CD4-positive, alpha-beta T cell (primary cell): ENCODE measurements at regions of chrX and their contacts with region 1.

Region 1: GRCh38 chrX:19887911-19888879 is 795 bp upstream of the SH3KBP1 start:
- DNase-seq: peak in 13 of 14 experiments; percentile 9 to 81 (median 26)
- ATAC-seq: peak; percentile 62
- H3K4me3 ChIP-seq: peak overlapping the region; percentile 66
- H3K4me3 Mint-ChIP-seq: peak overlapping the region; percentile 88
- H3K27ac ChIP-seq: peak overlapping the region in 1 of 2 donors; percentile 56
- H3K27ac Mint-ChIP-seq: peak overlapping the region; percentile 85
- H3K4me1 ChIP-seq: peaks cover 34% of the 10 kb centered on the region
- H3K4me1 Mint-ChIP-seq: peaks cover 51% of the 10 kb centered on the region
- H3K27me3 ChIP-seq: no peaks in the 10 kb centered on the region
- H3K27me3 Mint-ChIP-seq: no peaks in the 10 kb centered on the region
- CTCF ChIP-seq: peak; percentile 35

Region 2: DNA sequence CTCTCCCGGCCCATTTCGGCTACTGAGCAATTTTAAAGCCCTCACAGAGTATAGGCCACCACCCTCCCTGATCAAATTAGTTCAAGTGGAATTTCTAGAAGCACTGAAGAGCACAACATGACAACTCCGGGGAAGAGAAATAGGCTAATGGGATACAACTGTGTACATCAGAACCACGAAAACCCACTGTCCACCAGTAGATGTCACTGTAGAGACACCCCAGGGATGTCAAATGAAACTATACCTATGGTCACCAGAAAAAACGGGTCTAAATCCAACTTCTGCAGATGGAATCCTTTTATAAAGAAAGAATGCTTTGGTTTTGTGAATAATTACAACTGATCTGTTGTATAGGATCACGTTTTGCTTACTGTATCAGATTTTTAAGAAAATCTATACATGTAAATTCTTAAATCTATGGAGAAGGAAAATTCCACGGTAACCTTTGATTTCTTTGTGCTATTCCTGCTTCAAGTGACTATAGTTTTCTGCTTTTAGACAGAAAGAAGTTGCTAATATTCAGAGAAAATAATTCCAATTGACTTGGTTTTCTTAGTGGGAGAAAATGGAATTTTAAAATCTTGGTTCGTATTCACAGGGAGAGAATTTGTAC is 343.4 kb before region 1 on chrX:
- CTCF ChIA-PET with region 1: no interaction called
- POLR2A ChIA-PET with region 1: no interaction called
- intact Hi-C with region 1: loop called (anchors 1 to 2 kb)
- DNase-seq: peak in 9 of 14 experiments; percentile 5 to 64 (median 23)
- ATAC-seq: peak; percentile 60
- H3K4me3 ChIP-seq: no peak overlapping the region
- H3K4me3 Mint-ChIP-seq: no peak overlapping the region
- H3K27ac ChIP-seq: no peak overlapping the region
- H3K27ac Mint-ChIP-seq: peak overlapping the region; percentile 40
- H3K4me1 ChIP-seq: no peaks in the 10 kb centered on the region
- H3K4me1 Mint-ChIP-seq: no peaks in the 10 kb centered on the region
- H3K27me3 ChIP-seq: no peaks in the 10 kb centered on the region
- H3K27me3 Mint-ChIP-seq: no peaks in the 10 kb centered on the region
- CTCF ChIP-seq: peak; percentile 60

Region 3: GRCh38 chrX:19682712-19683331 is 205.4 kb before region 1 on chrX:
- CTCF ChIA-PET with region 1: interaction called, 7 read pairs
- POLR2A ChIA-PET with region 1: no interaction called
- intact Hi-C with region 1: loop called (anchors 2 kb)
- DNase-seq: peak; percentile 51 to 93 (median 64)
- ATAC-seq: peak; percentile 79
- H3K4me3 ChIP-seq: no peak overlapping the region
- H3K4me3 Mint-ChIP-seq: peak overlapping the region; percentile 49
- H3K27ac ChIP-seq: peak overlapping the region; percentile 73 to 87
- H3K27ac Mint-ChIP-seq: peak overlapping the region; percentile 91
- H3K4me1 ChIP-seq: peaks cover 53% of the 10 kb centered on the region
- H3K4me1 Mint-ChIP-seq: peaks cover 84% of the 10 kb centered on the region
- H3K27me3 ChIP-seq: no peaks in the 10 kb centered on the region
- H3K27me3 Mint-ChIP-seq: no peaks in the 10 kb centered on the region
- CTCF ChIP-seq: no peak

Region 4: DNA sequence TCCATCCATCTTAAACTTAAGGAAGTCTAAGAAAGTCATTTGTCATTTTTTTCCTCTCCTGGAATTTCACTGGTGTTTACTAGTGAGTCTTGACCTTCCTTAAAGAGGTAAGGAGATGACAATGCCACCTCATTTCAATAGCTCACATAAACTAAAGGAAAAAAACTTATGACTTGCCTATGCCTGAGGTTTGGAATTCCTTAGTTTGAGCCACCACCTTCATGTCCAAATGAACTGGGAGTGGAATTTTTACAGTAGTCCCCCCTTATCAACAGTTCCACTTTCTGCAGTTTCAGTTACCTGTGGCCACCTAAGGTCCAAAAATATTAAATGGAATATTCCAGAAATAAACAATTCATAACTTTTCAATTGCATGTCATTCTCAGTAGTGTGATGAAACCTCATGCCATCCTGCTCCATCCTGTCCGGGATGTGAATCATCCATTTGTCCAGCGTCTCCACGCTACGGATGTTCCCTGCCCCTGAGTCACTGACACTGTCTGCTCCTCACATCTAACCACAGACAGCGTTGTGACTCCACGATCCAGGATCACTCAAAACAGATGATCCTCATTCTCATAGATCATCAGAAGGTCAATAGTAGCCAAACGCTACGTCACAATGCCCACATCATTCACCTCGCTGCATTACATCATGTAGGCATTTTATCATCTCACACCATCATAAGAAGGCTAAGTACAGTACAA is 178.2 kb before region 1 on chrX:
- CTCF ChIA-PET with region 1: no interaction called
- POLR2A ChIA-PET with region 1: no interaction called
- intact Hi-C with region 1: no loop called
- DNase-seq: peak in 1 of 14 experiments; percentile 30
- ATAC-seq: no peak
- H3K4me3 ChIP-seq: no peak overlapping the region
- H3K4me3 Mint-ChIP-seq: no peak overlapping the region
- H3K27ac ChIP-seq: no peak overlapping the region
- H3K27ac Mint-ChIP-seq: peak overlapping the region; percentile 68
- H3K4me1 ChIP-seq: peaks cover 24% of the 10 kb centered on the region
- H3K4me1 Mint-ChIP-seq: peaks cover 74% of the 10 kb centered on the region
- H3K27me3 ChIP-seq: no peaks in the 10 kb centered on the region
- H3K27me3 Mint-ChIP-seq: no peaks in the 10 kb centered on the region
- CTCF ChIP-seq: no peak

Region 5: GRCh38 chrX:19747652-19748610 is 140.3 kb before region 1 on chrX:
- CTCF ChIA-PET with region 1: interaction called, 3 read pairs
- POLR2A ChIA-PET with region 1: interaction called, 12 read pairs
- intact Hi-C with region 1: no loop called
- DNase-seq: peak; percentile 61 to 89 (median 76)
- ATAC-seq: peak; percentile 81
- H3K4me3 ChIP-seq: no peak overlapping the region
- H3K4me3 Mint-ChIP-seq: peak overlapping the region; percentile 78
- H3K27ac ChIP-seq: peak overlapping the region; percentile 78 to 81
- H3K27ac Mint-ChIP-seq: peak overlapping the region; percentile 100
- H3K4me1 ChIP-seq: peaks cover 91% of the 10 kb centered on the region
- H3K4me1 Mint-ChIP-seq: peaks cover 100% of the 10 kb centered on the region
- H3K27me3 ChIP-seq: no peaks in the 10 kb centered on the region
- H3K27me3 Mint-ChIP-seq: no peaks in the 10 kb centered on the region
- CTCF ChIP-seq: no peak

Region 6: DNA sequence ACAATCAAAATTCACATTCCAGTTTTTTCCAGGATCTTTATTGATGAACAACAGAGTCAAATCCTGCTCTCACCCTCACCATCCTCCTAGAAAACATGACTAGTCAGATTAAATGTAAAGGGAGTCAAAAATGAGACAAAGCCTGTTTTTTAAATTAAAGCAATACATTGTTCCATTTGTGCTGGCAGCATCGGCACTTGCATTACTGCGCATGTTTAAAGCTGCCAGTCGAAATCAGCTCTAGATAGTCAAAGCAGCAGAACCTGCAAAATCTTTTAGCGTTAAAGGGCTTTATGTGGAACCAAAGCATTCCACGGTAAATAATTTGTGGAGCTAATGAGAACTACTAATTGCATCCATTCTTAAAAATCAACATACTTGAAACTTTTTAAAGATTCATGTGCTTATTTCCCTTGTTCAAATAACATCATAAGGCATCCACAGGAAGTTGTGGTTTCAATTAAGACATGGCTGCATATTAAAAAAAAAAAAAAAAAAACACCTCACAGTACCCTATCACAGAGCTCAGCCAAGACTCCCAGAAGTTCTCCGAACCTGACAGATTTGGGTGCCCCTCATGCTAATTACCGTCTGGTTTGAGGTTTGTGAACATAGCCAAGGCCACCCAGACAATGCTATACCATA is 83.0 kb before region 1 on chrX:
- CTCF ChIA-PET with region 1: no interaction called
- POLR2A ChIA-PET with region 1: interaction called, 12 read pairs
- intact Hi-C with region 1: loop called in 1 of 2 experiments (anchors 5 kb)
- DNase-seq: peak in 4 of 14 experiments; percentile 17 to 69 (median 60)
- ATAC-seq: peak; percentile 82
- H3K4me3 ChIP-seq: peak overlapping the region; percentile 36
- H3K4me3 Mint-ChIP-seq: peak overlapping the region; percentile 78
- H3K27ac ChIP-seq: peak overlapping the region; percentile 41 to 48
- H3K27ac Mint-ChIP-seq: peak overlapping the region; percentile 94
- H3K4me1 ChIP-seq: peaks cover 48% of the 10 kb centered on the region
- H3K4me1 Mint-ChIP-seq: peaks cover 62% of the 10 kb centered on the region
- H3K27me3 ChIP-seq: no peaks in the 10 kb centered on the region
- H3K27me3 Mint-ChIP-seq: no peaks in the 10 kb centered on the region
- CTCF ChIP-seq: no peak

Region 7: DNA sequence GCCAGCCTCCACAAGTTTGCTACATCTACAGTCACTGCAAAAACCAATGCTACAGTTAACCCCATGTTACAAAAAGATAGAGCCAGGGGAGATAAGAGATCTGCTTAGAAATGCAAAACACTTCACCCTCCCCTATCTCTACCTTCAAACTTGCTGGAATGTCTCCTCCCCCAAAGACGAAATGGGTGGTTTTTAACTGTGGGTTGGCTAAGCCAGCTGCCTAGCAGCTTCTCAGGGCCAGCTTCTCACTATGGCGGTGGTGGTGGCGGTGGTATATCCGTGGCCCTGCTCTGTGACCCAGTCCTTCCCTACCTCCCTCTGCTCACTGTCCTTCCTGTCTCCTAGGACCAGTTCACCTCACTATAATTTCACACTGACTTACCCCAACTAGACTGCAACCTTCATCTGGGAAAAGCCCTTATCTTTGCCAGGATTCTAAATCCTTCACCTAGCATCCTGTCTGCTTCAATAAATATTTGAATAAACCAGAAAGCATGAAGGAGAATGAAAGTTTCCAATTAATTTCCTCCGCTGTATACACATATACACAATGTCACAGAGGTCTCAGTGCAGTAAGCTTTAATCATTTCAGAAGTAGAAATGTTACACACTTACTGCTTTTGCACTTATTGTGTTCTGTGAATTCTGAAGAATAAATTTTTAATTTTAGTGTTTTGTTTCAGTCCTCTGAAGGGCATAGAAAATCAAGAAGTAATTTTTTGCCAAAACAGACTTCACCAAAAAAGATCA is 47.1 kb before region 1 on chrX:
- CTCF ChIA-PET with region 1: interaction called, 4 read pairs
- POLR2A ChIA-PET with region 1: interaction called, 5 read pairs
- intact Hi-C with region 1: loop called (anchors 5 kb)
- DNase-seq: peak in 10 of 14 experiments; percentile 2 to 78 (median 25)
- ATAC-seq: peak; percentile 75
- H3K4me3 ChIP-seq: no peak overlapping the region
- H3K4me3 Mint-ChIP-seq: peak overlapping the region; percentile 68
- H3K27ac ChIP-seq: peak overlapping the region; percentile 30 to 34
- H3K27ac Mint-ChIP-seq: peak overlapping the region; percentile 87
- H3K4me1 ChIP-seq: peaks cover 46% of the 10 kb centered on the region
- H3K4me1 Mint-ChIP-seq: peaks cover 69% of the 10 kb centered on the region
- H3K27me3 ChIP-seq: no peaks in the 10 kb centered on the region
- H3K27me3 Mint-ChIP-seq: no peaks in the 10 kb centered on the region
- CTCF ChIP-seq: no peak